Activated CD4-positive, alpha-beta T cell treated with anti-CD3 and anti-CD28 coated beads, Interleukin-2, amount 10 ng/mL, durations not matched to agents 24 days and 14 days (primary cell): ENCODE measurements at regions of chr2 and their contacts with region 1.

Region 1: DNA sequence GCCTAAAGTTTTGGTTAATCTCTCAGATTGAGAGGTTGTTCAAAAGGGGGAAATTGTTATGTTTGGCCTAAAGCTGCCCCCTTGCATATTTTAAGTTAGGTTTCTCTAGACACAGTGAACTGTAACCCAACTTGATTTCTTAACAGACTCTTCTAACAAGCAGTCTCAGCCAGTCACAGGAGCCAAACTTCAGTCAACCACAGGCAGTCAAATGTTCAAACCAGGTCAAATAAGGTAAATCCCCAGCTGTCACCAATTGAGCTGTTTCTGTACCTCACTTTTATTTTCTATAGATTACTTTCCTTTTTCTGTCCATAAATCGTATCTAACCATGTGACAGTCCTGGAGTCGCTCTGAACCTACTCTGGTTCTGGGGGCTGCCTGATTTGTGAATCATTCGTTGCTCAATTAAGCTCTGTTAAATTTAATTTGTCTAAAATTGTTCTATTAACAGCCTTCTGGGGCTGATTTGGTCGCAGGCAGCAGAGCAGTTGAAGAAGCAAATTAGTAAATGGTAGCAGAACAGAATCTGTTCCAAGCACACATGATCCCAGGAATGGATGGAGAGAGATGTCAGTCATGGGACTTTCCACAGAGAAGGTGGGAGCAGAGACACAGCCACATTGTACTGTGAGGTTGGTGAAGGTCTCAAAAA is 16.4 kb upstream of the NFU1 start:
- DNase-seq: no peak
- H3K4me3 Mint-ChIP-seq: no peak overlapping the region
- H3K27ac Mint-ChIP-seq: peak overlapping the region; percentile 35
- H3K4me1 Mint-ChIP-seq: peaks cover 17% of the 10 kb centered on the region
- H3K27me3 Mint-ChIP-seq: peaks cover 4% of the 10 kb centered on the region

Region 2: DNA sequence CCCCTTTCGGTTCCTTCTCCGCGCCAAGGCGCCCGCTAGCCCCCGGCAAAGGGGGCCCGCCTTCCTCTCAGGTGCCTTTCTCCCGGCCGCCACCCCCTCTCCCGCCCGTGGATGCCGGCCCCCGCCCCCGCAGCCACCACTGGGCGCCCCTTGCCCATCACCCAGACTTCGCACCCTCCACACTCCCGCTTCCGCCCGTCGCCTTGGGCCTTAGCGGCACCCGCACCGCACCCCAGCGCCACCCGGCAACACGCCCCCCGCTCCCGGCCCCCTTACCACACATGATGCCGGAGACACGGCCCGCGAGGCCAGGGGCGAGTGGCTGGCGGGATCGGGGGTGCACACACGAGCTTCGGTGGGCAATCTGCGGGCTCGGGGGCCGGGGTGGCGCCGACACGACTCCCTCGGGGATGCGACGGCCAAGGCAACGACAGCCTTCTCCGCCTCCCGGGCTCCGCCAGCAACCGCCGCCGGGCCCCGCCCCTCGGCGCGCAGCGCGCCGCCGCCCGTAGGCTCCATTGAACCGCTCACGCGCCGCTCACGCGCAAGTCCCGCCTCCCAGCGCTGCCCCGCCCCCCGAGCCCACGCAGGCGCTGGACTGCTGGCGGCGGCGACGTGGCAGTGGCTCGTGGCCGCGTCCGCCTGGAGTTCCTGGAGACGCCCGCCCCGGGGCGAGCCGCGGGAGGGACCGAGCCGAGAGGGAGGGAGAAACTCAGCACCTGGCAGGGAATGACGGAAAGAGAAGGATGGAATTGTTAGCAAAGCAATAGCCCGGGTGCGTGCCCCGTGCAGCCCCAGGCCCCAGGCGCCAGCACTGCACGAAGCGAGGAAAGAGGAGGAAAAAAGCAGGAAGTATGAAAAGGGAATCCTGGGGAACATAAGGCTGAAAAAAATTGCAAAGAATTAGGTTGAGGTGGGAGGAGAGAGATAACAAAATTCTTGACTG is 66.5 kb before region 1 on chr2 and contains the start of gene GFPT1:
- intact Hi-C with region 1: no loop called
- DNase-seq: peak; percentile 99
- H3K4me3 Mint-ChIP-seq: peak within 1 kb of the TSS; percentile 98
- H3K27ac Mint-ChIP-seq: peak within 1 kb of the TSS; percentile 95
- H3K4me1 Mint-ChIP-seq: peaks cover 40% of the 10 kb centered on the region
- H3K27me3 Mint-ChIP-seq: no peaks in the 10 kb centered on the region
- total RNA-seq, gene GFPT1: 48.8 and 50.6 TPM in 2 replicates

Region 3: GRCh38 chr2:69509007-69509749 is 55.6 kb after region 1 on chr2:
- intact Hi-C with region 1: loop called (anchors 2 kb)
- DNase-seq: no peak
- H3K4me3 Mint-ChIP-seq: peak overlapping the region; percentile 20
- H3K27ac Mint-ChIP-seq: peak overlapping the region; percentile 88
- H3K4me1 Mint-ChIP-seq: peaks cover 33% of the 10 kb centered on the region
- H3K27me3 Mint-ChIP-seq: no peaks in the 10 kb centered on the region